ENCODE measurements at regions of chr17 and their contacts with region 1.

Region 1: DNA sequence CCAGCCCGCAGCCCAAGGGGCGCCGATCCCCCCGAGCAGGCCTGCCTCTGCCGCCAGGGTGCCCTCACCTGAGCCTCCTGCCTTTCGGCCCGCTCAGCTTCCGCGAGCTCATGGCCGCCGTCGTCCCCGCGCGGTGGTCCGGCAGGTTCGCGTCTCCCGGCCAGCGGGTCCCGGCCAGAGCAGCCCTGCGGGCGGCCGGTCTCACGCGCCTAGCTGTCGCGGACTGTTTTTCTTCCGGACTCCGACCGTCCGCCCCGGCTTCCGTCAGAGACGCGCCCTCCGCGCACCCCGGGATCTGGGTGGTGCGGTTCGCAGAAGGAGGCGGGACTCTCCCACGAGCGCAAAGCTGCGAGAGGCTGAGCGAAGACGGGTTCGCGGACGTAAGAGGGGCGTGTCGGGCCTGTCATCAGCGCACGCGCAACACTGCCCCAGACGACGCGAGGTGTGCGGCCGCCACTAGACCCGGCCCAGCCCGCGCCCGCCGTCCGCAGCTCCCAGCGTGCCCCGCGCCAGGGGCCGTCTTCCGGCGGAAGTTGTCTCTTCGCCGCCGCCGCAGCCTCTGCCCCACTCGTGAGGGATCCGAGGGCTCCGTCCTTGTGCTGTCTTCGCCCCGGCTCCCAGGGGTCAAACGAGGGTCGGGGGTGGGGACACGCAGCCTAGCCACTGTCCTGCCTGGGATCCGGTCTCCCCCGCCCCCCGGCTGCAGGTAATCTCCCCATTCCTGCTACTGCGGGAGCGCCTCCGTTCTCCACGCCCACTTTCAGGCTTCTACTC is at the start of gene INPP5K:
- DNase-seq: peak; percentile 97 to 99 (median 98)
- H3K4me3 ChIP-seq: peak within 1 kb of the TSS; percentile 68 to 97
- H3K4me3 Mint-ChIP-seq: peak within 1 kb of the TSS; percentile 90 to 95 (median 92)
- H3K27ac ChIP-seq: peak within 1 kb of the TSS; percentile 89
- H3K27ac Mint-ChIP-seq: peak within 1 kb of the TSS; percentile 92 to 97 (median 95)
- H3K4me1 ChIP-seq: peaks cover 26% of the 10 kb centered on the region
- H3K4me1 Mint-ChIP-seq: peaks cover 15 to 43% (median 29%) of the 10 kb centered on the region in 4 donors
- H3K27me3 ChIP-seq: no peaks in the 10 kb centered on the region
- H3K27me3 Mint-ChIP-seq: no peaks in the 10 kb centered on the region
- total RNA-seq, gene INPP5K: 73.6 to 78.5 TPM

Region 2: DNA sequence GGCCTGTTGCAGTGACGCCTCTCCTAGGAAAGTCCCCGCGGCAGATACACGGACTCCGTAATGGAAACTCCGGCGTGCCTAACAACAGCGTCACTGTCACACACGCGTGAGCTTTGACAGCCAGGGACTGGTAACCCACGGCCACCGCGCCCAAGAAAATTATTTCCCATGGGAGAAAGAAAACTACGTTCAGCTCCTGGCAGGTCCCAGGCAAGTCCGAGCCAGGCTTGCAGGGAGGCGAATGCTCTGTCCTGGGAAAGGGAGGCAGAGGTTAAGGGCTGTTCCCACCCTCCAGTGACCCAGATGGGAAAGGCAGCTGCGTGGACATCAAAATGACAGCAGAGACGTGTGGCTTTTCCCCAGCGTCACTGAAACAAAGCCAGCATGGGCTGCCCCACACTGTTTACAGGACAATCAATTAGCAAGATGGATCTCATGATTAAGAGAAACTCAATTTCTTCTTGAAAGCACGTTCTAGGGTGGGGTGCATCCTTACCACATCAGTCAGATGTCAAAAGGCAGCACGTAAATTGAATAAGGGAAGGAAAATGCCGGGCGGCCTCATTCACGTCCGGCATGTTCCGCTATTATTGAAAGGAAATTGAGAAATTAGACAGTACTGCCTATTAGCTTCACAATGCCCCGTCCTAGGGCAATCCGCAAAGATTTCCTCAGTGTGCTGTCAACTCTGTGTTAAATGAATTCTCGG is 619.5 kb before region 1 on chr17:
- CTCF ChIA-PET with region 1: no interaction called
- POLR2A ChIA-PET with region 1: no interaction called
- intact Hi-C with region 1: no loop called
- DNase-seq: no peak
- H3K4me3 ChIP-seq: no peak overlapping the region
- H3K4me3 Mint-ChIP-seq: no peak overlapping the region
- H3K27ac ChIP-seq: no peak overlapping the region
- H3K27ac Mint-ChIP-seq: no peak overlapping the region
- H3K4me1 ChIP-seq: no peaks in the 10 kb centered on the region
- H3K4me1 Mint-ChIP-seq: peaks cover 0 to 3% (median 1%) of the 10 kb centered on the region in 4 donors
- H3K27me3 ChIP-seq: no peaks in the 10 kb centered on the region
- H3K27me3 Mint-ChIP-seq: peaks cover 19 to 24% of the 10 kb centered on the region in 2 donors

Region 3: GRCh38 chr17:1267471-1267947 is 249.1 kb before region 1 on chr17:
- CTCF ChIA-PET with region 1: interaction called, 3 read pairs
- POLR2A ChIA-PET with region 1: interaction called, 3 read pairs
- intact Hi-C with region 1: loop called (anchors 2 kb)
- DNase-seq: peak in 1 of 5 donors; percentile 12
- H3K4me3 ChIP-seq: peak overlapping the region in 1 of 2 donors; percentile 52
- H3K4me3 Mint-ChIP-seq: peak overlapping the region; percentile 73 to 85 (median 79)
- H3K27ac ChIP-seq: no peak overlapping the region
- H3K27ac Mint-ChIP-seq: peak overlapping the region; percentile 34 to 82 (median 70)
- H3K4me1 ChIP-seq: peaks cover 8% of the 10 kb centered on the region
- H3K4me1 Mint-ChIP-seq: peaks cover 0 to 15% (median 4%) of the 10 kb centered on the region in 4 donors
- H3K27me3 ChIP-seq: no peaks in the 10 kb centered on the region
- H3K27me3 Mint-ChIP-seq: peaks cover 3 to 11% of the 10 kb centered on the region in 2 donors

Region 4: DNA sequence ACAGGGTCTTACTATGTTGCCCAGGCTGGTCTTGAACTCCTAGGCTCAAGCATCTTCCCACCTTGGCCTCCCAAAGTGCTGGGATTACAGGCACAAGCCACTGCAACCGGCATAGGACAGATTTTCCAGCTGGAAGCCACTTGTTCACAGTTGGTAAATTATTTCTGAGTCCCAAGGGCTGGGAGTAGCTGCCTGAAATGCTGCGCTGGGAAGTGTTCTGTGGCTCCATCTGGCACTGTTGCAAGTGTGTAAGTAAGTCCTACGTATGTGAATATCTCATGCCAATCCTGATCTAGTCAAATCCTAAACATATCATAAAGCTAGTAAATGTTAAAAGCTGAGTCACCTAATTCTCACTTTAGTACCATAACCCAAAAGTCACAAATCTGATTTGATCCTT is 164.6 kb before region 1 on chr17:
- CTCF ChIA-PET with region 1: no interaction called
- POLR2A ChIA-PET with region 1: interaction called, 10 read pairs
- intact Hi-C with region 1: no loop called
- DNase-seq: no peak
- H3K4me3 ChIP-seq: no peak overlapping the region
- H3K4me3 Mint-ChIP-seq: no peak overlapping the region
- H3K27ac ChIP-seq: no peak overlapping the region
- H3K27ac Mint-ChIP-seq: peak overlapping the region in 3 of 7 donors; percentile 4 to 42 (median 32)
- H3K4me1 ChIP-seq: peaks cover 11% of the 10 kb centered on the region
- H3K4me1 Mint-ChIP-seq: peaks cover 16 to 26% (median 17%) of the 10 kb centered on the region in 4 donors
- H3K27me3 ChIP-seq: no peaks in the 10 kb centered on the region
- H3K27me3 Mint-ChIP-seq: no peaks in the 10 kb centered on the region

Region 5: DNA sequence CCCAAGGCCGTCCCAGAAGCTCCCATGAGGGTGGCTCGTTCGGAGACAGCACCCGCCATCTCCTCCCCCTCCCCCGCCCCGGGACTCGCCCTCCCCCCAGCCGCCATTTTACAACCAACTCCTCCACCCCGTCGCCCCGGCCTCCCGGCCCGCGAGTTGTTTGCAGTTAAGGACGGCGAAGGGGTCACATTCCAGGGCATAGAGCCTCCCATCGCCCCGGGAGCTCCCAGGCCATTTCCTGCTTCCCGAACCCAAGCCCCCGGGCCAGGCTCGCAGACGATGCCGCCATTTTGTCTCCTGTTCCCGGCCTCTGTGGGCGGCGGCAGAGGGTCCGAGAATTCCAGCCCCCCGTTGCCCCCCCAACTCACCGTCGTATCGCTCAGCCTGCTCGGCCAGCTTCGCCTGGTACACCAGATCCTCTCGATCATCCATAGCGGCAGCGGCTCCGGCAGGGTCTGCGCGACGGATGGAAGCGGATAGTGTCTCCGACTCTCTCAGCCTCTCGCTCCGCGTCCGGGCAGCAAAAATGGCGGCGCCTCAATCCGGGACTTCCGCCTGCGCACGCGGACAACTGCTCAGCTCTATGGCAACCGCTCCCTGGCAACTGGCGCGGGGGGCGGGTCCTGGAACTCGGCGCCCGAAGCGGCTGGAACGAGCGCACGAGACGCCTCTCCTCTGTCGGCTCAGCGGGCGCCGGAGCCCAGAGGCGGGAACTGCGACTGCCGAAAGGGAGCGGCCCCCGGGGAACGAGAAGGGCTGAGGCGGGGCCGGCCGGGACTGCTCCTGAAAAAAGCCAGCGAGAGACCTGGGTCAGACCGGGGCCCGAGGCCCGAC is 116.7 kb before region 1 on chr17 and contains the start of gene YWHAE:
- CTCF ChIA-PET with region 1: interaction called, 17 read pairs
- POLR2A ChIA-PET with region 1: interaction called, 40 read pairs
- intact Hi-C with region 1: loop called (anchors 1 kb)
- DNase-seq: peak; percentile 93 to 96 (median 94)
- H3K4me3 ChIP-seq: peak within 1 kb of the TSS; percentile 76 to 100
- H3K4me3 Mint-ChIP-seq: peak within 1 kb of the TSS; percentile 96 to 99 (median 98)
- H3K27ac ChIP-seq: peak within 1 kb of the TSS; percentile 95
- H3K27ac Mint-ChIP-seq: peak within 1 kb of the TSS; percentile 97 to 100 (median 98)
- H3K4me1 ChIP-seq: peaks cover 41% of the 10 kb centered on the region
- H3K4me1 Mint-ChIP-seq: peaks cover 23 to 42% (median 33%) of the 10 kb centered on the region in 4 donors
- H3K27me3 ChIP-seq: no peaks in the 10 kb centered on the region
- H3K27me3 Mint-ChIP-seq: peaks cover 0 to 3% of the 10 kb centered on the region in 2 donors
- total RNA-seq, gene YWHAE: 142 to 143 TPM

Region 6: DNA sequence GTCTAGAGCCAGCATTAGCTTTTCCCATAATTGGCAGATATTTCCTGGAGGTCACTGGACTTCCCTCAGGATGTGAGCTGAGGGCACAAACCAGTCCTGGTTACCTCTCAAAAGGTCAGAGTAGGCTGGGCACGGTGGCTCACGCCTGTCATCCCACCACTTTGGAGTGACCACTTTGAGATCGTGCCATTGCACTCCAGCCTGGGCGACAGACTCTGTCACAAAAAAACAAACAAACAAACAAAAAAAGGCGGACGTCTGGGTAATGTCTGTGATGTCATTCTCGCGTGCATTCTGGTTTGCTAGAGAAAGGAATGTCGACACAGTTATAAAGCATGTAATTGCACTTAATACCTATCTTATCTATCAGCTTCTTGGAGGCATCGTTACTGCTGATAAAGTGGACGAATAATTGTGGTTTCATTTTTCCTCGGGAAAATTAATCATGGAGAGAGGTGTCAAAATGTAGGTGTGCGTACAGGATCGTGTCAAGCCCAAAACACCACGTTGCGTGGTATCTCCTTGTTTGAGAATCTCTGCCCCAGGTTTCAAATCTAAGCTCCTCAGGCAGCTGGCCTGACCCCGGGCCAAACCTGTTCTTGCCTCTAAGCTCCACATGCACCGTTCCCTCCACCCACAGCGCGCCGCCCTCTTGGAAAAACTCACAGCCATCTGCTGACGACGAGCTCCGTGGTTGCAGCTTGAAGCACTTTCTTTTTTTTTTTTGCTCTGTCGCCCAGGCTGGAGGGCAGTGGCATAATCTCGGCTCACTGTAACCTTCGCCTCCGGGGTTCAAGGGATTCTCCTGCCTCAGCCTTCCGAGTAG is 54.1 kb before region 1 on chr17:
- CTCF ChIA-PET with region 1: interaction called, 7 read pairs
- POLR2A ChIA-PET with region 1: interaction called, 33 read pairs
- intact Hi-C with region 1: no loop called
- DNase-seq: peak in 2 of 5 donors; percentile 11 to 50
- H3K4me3 ChIP-seq: no peak overlapping the region
- H3K4me3 Mint-ChIP-seq: peak overlapping the region; percentile 77 to 87 (median 82)
- H3K27ac ChIP-seq: no peak overlapping the region
- H3K27ac Mint-ChIP-seq: peak overlapping the region; percentile 87 to 97 (median 94)
- H3K4me1 ChIP-seq: peaks cover 38% of the 10 kb centered on the region
- H3K4me1 Mint-ChIP-seq: peaks cover 22 to 42% (median 30%) of the 10 kb centered on the region in 4 donors
- H3K27me3 ChIP-seq: no peaks in the 10 kb centered on the region
- H3K27me3 Mint-ChIP-seq: no peaks in the 10 kb centered on the region

Region 7: GRCh38 chr17:1532836-1533602 is 16.4 kb after region 1 on chr17:
- CTCF ChIA-PET with region 1: interaction called, 9 read pairs
- POLR2A ChIA-PET with region 1: interaction called, 21 read pairs
- intact Hi-C with region 1: no loop called
- DNase-seq: peak; percentile 37 to 58 (median 44)
- H3K4me3 ChIP-seq: no peak overlapping the region
- H3K4me3 Mint-ChIP-seq: no peak overlapping the region
- H3K27ac ChIP-seq: no peak overlapping the region
- H3K27ac Mint-ChIP-seq: peak overlapping the region in 4 of 7 donors; percentile 27 to 85 (median 58)
- H3K4me1 ChIP-seq: no peaks in the 10 kb centered on the region
- H3K4me1 Mint-ChIP-seq: peaks cover 0 to 4% (median under 1%) of the 10 kb centered on the region in 4 donors
- H3K27me3 ChIP-seq: no peaks in the 10 kb centered on the region
- H3K27me3 Mint-ChIP-seq: no peaks in the 10 kb centered on the region